ENCODE measurements at regions of chr2 and their contacts with region 1.

Region 1: GRCh38 chr2:99337113-99338028 is at the start of gene EIF5B:
- H3K4me3 ChIP-seq: peak within 1 kb of the TSS; percentile 87
- H3K27ac ChIP-seq: peak within 1 kb of the TSS; percentile 78
- H3K4me1 ChIP-seq: peaks cover 9% of the 10 kb centered on the region
- CTCF ChIP-seq: peak; percentile 90

Region 2: DNA sequence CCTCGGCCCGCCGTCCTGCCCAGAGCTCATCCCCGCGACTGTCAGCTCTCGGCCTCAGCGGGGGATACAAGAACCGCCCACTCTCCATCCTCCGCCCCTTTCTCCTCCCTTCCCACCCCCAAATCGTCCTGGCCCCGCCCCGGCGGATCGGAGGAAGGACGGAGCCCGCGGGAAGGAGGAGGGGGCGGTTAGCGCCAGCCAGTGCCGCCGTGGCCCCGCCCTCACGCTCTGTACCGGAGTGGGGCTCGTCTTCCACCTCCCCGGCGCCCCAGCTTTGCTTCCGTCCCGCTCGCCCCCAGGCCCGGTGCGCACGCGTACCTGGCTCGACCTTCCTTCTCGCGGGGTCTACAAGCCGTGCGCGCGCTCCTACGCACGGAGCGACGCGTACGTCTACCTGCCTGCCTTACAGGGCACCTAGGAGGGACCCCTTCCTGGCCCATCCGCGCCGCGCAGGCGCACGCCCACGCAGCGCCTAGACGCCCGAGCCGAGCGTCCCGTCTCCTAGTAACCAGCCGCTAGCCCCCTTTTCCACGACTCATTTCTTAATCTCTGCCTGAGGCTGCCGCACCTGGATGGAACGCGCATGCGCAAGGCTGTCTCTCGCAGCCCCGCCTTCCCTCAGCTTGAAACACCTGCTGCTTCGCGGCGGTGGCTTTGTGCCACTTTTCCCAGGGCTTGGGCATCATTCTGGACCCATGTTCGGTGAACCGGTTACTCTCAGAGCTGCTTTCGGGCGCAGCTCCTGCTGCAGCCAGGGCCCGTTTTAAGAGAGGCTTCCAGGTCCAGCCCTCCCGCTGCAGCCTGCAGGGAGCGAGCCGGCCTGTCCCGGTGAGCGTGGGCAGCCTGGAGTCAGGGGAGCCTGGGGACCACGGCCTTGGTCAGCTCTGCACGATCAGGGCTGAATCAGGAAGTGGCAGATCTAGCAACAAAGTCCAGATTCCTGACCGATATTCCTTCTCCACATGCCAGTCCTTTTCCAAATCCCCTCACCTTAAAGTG is 196.0 kb before region 1 on chr2 and contains the start of gene C2orf15:
- CTCF ChIA-PET with region 1: interaction called, 3 read pairs
- POLR2A ChIA-PET with region 1: interaction called, 33 read pairs
- H3K4me3 ChIP-seq: peak within 1 kb of the TSS; percentile 81
- H3K27ac ChIP-seq: peak within 1 kb of the TSS; percentile 74; the same call in 1 of the 2 replicates
- H3K4me1 ChIP-seq: peaks cover 2% of the 10 kb centered on the region; the same call in 1 of the 2 replicates
- CTCF ChIP-seq: no peak

Region 3: DNA sequence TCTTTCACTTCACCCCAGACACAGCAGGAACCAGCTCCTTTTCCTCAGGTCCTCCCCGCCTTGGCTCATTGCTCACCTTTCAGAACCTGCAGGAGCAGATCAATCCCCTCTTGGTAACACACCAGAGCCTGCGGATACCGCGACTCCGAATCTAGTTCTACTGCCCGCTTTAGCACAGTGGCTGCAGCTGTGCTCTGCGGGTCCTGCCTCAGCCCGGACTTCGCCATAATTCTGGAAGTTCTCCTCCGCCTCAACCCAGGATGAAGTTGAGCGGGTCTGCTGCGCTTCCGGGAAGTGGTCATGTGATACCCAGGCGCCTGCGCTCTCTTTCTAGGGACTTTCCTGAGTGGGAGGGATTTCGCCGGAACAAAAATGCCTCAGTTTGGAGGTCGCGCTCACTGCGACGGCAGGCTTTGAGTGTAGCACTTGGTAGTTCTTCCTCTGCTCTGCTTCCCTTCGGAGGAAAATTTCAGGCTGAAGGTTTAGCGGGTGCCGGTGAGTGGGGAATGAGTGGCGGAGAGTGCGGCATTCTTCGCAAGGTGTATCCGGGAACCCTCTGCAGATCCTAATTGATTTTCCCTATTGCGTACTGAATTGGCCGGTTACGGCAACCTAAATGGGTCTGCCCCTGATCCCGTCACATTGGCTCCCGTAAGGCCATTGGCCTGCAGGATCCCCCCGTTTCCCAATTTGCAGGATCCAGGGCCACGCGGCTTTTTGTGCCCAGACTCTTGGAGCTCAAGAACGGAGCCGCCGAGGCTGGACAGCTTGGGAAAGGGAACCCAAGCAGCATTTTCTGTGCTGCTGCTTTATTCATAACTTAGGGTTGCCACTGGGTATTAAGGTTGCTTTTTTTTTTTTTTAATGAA is 156.4 kb before region 1 on chr2 and contains the starts of genes MITD1 and MRPL30:
- CTCF ChIA-PET with region 1: interaction called, 4 read pairs
- POLR2A ChIA-PET with region 1: interaction called, 32 read pairs
- H3K4me3 ChIP-seq: peak within 1 kb of the TSS; percentile 71
- H3K27ac ChIP-seq: peak within 1 kb of the TSS; percentile 55; the same call in 1 of the 2 replicates
- H3K4me1 ChIP-seq: 0 out of 2 replicates have a peak, but pooled peaks cover 2% of the 10 kb centered on the region
- CTCF ChIP-seq: no peak

Region 4: GRCh38 chr2:99354070-99354469 is 16.7 kb after region 1 on chr2:
- CTCF ChIA-PET with region 1: interaction called, 11 read pairs
- POLR2A ChIA-PET with region 1: interaction called, 16 read pairs
- H3K4me3 ChIP-seq: no peak overlapping the region
- H3K27ac ChIP-seq: no peak overlapping the region
- H3K4me1 ChIP-seq: peaks cover 13% of the 10 kb centered on the region; the same call in 1 of the 2 replicates
- CTCF ChIP-seq: no peak

Region 5: DNA sequence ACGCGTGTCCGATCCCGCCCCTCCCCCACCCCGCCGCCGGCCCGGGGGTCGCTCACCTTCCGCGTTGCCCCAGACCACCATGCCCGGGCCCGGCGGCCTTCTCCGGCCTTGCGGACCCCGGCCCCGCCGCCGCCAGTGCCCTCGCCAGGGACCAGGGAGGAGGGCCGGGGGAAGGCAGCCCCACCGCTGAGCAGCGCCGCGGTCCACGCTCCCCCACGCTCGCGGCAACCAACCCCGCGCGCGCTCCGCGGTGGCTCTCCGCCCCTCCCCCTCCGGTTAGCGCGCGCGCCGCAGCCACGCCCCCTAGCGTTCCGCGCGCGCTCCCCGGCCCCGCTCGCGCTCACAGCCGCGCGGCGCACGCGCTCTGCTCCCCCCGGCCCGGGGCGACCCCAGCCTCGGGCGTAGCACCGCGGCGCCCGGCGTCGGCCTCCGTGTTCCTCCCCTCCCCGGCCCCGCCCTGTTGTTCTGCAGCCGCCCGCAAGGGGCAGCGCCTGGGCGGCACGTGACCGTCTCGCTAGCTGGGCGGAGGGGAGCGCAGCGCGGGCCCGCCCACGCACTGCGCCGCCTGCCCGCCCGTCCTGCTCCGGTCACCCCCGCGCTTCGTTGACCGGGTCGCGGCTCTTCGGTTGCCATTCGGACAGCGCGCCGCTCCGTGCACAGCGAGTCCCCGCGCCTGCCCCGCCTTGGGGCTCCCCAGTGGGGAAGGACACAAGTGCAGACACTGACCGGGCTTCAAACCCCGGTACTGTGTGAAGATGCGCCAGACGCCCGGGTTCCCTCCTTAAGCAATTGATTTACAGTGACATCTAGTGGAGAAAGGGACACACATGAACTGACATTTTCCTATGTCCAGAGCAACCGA is 152.6 kb after region 1 on chr2 and contains the start of gene REV1:
- CTCF ChIA-PET with region 1: no interaction called
- POLR2A ChIA-PET with region 1: interaction called, 10 read pairs
- H3K4me3 ChIP-seq: peak within 1 kb of the TSS; percentile 65
- H3K27ac ChIP-seq: peak within 1 kb of the TSS; percentile 87
- H3K4me1 ChIP-seq: peaks cover 22% of the 10 kb centered on the region
- CTCF ChIP-seq: peak; percentile 91